ENCODE measurements at regions of chr2 and their contacts with region 1.

Region 1: GRCh38 chr2:100640431-100641124 is 77.8 kb downstream of the PDCL3 start:
- DNase-seq: no peak
- ATAC-seq: no peak
- H3K4me3 ChIP-seq: no peak overlapping the region
- H3K4me3 Mint-ChIP-seq: peak overlapping the region in 1 of 10 donors; percentile 1
- H3K27ac ChIP-seq: no peak overlapping the region
- H3K27ac Mint-ChIP-seq: peak overlapping the region in 2 of 9 donors; percentile 43 to 65
- H3K4me1 ChIP-seq: peaks cover 9 to 37% of the 10 kb centered on the region in 2 donors
- H3K4me1 Mint-ChIP-seq: peaks cover 25 to 57% (median 56%) of the 10 kb centered on the region in 7 donors
- H3K27me3 ChIP-seq: no peaks in the 10 kb centered on the region
- H3K27me3 Mint-ChIP-seq: peaks cover 0 to 31% (median 0%) of the 10 kb centered on the region in 5 donors

Region 2: GRCh38 chr2:100630473-100630977 is 10.1 kb before region 1 on chr2:
- CTCF ChIA-PET with region 1: interaction called, 4 read pairs
- POLR2A ChIA-PET with region 1: interaction called, 25 read pairs
- intact Hi-C with region 1: no loop called
- DNase-seq: peak in 4 of 9 donors; percentile 30 to 44 (median 36)
- ATAC-seq: peak; percentile 45
- H3K4me3 ChIP-seq: no peak overlapping the region
- H3K4me3 Mint-ChIP-seq: peak overlapping the region in 9 of 10 donors; percentile 8 to 74 (median 52)
- H3K27ac ChIP-seq: no peak overlapping the region
- H3K27ac Mint-ChIP-seq: peak overlapping the region in 7 of 9 donors; percentile 8 to 86 (median 53)
- H3K4me1 ChIP-seq: peaks cover 0 to 14% of the 10 kb centered on the region in 2 donors
- H3K4me1 Mint-ChIP-seq: peaks cover 25 to 46% (median 31%) of the 10 kb centered on the region in 7 donors
- H3K27me3 ChIP-seq: no peaks in the 10 kb centered on the region
- H3K27me3 Mint-ChIP-seq: peaks cover 0 to 11% (median 0%) of the 10 kb centered on the region in 5 donors

Region 3: DNA sequence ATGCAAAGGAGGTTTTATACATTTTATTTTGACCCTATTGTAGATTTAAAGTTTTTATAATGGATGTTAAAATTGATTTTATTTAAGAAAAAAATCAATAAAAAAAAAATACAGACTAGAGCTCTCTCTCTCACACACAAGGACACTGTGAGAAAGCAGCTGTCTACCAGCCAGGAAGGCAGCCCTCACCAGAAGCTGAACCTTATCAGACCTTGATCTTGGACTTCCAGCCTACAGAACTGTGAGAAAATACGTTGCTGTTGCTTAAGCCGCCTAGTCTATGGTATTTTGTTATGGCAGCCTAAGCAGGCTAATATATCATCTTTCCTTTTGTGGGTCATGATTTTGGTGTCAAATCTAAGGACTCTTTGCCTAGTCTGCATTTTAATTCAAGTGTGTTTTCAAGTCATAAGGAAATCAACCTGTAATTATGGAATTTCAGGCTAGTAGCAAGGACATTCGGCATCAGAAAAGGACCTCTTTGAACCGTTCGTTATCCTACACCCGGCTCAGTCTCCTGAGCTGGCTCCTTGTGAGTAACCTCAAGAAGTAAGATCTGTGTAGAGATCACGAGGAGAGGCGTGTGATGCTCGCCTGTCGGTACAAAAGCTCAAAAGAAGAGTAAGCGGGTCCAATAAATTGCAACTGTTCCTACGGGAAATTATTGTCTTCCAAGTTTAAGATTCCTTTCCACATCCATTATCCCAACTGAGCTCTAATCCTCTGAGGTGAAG is 20.4 kb after region 1 on chr2:
- CTCF ChIA-PET with region 1: interaction called, 3 read pairs
- POLR2A ChIA-PET with region 1: interaction called, 10 read pairs
- intact Hi-C with region 1: no loop called
- DNase-seq: no peak
- ATAC-seq: no peak
- H3K4me3 ChIP-seq: no peak overlapping the region
- H3K4me3 Mint-ChIP-seq: peak overlapping the region in 1 of 10 donors; percentile 29
- H3K27ac ChIP-seq: no peak overlapping the region
- H3K27ac Mint-ChIP-seq: no peak overlapping the region
- H3K4me1 ChIP-seq: peaks cover 0 to 6% of the 10 kb centered on the region in 2 donors
- H3K4me1 Mint-ChIP-seq: peaks cover 0 to 28% (median 20%) of the 10 kb centered on the region in 7 donors
- H3K27me3 ChIP-seq: no peaks in the 10 kb centered on the region
- H3K27me3 Mint-ChIP-seq: peaks cover 0 to 10% (median 0%) of the 10 kb centered on the region in 5 donors

Region 4: GRCh38 chr2:100818606-100819369 is 178.2 kb after region 1 on chr2:
- CTCF ChIA-PET with region 1: no interaction called
- POLR2A ChIA-PET with region 1: interaction called, 3 read pairs
- intact Hi-C with region 1: loop called in 1 of 2 experiments (anchors 10 kb)
- DNase-seq: peak in 6 of 9 donors; percentile 3 to 28 (median 18)
- ATAC-seq: peak; percentile 33
- H3K4me3 ChIP-seq: peak overlapping the region; percentile 48
- H3K4me3 Mint-ChIP-seq: peak overlapping the region; percentile 72 to 91 (median 82)
- H3K27ac ChIP-seq: no peak overlapping the region
- H3K27ac Mint-ChIP-seq: peak overlapping the region in 5 of 9 donors; percentile 29 to 84 (median 36)
- H3K4me1 ChIP-seq: peaks cover 0 to 22% of the 10 kb centered on the region in 2 donors
- H3K4me1 Mint-ChIP-seq: peaks cover 16 to 64% (median 37%) of the 10 kb centered on the region in 7 donors
- H3K27me3 ChIP-seq: no peaks in the 10 kb centered on the region
- H3K27me3 Mint-ChIP-seq: peaks cover 0 to 55% (median 33%) of the 10 kb centered on the region in 5 donors